Naive thymus-derived CD4-positive, alpha-beta T cell (primary cell): ENCODE measurements at regions of chrX and their contacts with region 1.

Region 1: DNA sequence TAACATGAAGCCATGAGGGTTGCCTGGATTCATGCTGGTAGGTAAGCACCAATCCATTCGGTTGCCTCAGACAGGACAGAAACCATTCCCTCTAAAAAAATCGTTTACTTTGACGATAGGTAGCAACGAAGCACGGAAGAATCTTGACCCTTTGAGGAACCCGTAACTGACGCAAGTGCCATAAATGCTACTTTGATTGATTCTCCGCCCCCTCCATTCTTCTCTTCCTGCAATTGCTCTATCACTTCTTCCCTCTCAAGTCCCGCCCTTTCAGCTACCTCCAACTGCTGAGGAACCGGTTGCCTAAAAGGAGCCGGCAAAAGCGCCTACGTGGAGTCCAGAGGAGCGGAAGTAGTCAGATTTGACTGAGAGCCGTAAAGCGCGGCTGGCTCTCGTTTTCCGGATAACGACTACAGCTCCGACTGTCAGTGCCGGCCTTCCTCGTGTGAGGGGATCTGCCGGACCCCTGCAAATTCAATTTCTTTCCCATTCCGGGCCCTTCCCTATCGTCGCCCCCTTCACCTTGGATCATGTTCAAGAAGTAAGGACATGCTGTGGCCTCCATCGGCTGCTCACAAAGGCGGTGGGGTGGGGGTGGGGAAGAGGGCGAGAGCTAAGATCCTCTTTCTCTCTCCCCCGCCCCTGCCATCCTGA is at the start of gene MCTS1:
- DNase-seq: peak; percentile 40 to 91 (median 82)
- ATAC-seq: peak; percentile 95
- H3K4me3 ChIP-seq: peak within 1 kb of the TSS; percentile 55
- H3K4me3 Mint-ChIP-seq: peak within 1 kb of the TSS; percentile 91 to 99 (median 96)
- H3K27ac ChIP-seq: peak within 1 kb of the TSS; percentile 87
- H3K27ac Mint-ChIP-seq: peak within 1 kb of the TSS; percentile 96 to 99 (median 98)
- H3K4me1 ChIP-seq: peaks cover 6 to 10% of the 10 kb centered on the region in 2 donors
- H3K4me1 Mint-ChIP-seq: peaks cover 0 to 19% (median 10%) of the 10 kb centered on the region in 7 donors
- H3K27me3 ChIP-seq: no peaks in the 10 kb centered on the region
- H3K27me3 Mint-ChIP-seq: peaks cover 0 to 7% (median 0%) of the 10 kb centered on the region in 5 donors
- total RNA-seq, gene MCTS1: 17.6 to 55.6 (median 27.3) TPM

Region 2: DNA sequence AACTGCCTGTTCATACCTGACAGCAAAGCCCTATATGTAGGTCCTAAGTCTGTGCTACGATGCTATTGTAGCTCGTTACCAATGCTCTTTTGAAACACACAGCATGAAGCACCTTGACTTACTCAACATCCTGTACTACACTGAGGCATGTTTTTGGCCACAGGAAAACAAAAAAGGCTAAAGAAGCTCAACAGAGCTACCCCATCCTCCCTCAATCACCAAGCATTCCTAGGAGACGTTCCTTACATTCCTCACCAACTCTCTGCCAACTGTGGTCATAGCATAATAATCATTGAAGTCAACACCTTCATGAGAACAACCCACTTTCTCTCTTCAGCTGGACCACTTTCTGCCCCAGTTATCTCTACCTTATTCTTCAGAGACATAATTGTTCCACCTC is 1278.4 kb before region 1 on chrX:
- CTCF ChIA-PET with region 1: no interaction called
- POLR2A ChIA-PET with region 1: no interaction called
- intact Hi-C with region 1: no loop called
- DNase-seq: no peak
- ATAC-seq: no peak
- H3K4me3 ChIP-seq: no peak overlapping the region
- H3K4me3 Mint-ChIP-seq: no peak overlapping the region
- H3K27ac ChIP-seq: no peak overlapping the region
- H3K27ac Mint-ChIP-seq: no peak overlapping the region
- H3K4me1 ChIP-seq: no peaks in the 10 kb centered on the region
- H3K4me1 Mint-ChIP-seq: no peaks in the 10 kb centered on the region
- H3K27me3 ChIP-seq: no peaks in the 10 kb centered on the region
- H3K27me3 Mint-ChIP-seq: peaks cover 0 to 8% (median 0%) of the 10 kb centered on the region in 5 donors

Region 3: DNA sequence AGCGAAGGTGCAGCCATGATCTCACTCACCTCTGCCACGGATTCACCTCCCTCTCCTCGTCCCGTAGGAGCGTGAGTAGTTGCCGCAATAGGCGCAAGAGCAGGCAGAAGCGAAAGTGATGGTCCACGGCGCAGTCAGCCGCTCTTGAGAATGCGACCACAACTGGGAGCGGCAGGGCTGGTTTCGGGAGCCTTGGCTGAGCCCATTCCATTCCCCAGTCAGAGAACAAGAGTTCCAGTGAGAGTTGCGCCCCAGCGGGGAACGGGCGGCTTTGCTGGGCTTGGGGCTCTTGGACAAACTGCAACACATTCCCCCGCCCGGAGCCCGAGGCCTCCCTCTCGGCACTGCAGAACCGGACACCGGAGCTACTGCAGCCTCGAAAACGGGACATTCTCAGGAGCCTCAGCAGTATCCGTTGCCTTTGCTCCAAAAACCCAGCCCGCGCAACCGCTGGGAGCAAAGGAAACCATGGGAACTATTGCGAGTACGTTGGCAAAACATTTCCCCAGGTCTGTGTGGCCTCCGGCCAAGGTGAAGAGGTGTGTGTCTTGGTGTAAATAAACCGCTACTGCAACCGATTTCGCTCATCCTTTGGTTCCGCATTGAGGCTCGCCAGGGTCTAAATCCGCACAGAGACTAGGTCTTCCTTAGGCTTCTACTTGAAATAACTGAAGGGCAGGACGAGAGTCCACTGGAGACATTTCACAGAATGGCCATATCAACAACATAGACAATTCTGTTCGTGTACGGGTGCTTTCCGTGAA is 358.9 kb before region 1 on chrX:
- CTCF ChIA-PET with region 1: no interaction called
- POLR2A ChIA-PET with region 1: no interaction called
- intact Hi-C with region 1: loop called in 1 of 2 experiments (anchors 10 kb)
- DNase-seq: peak; percentile 22 to 68 (median 52)
- ATAC-seq: peak; percentile 92
- H3K4me3 ChIP-seq: peak overlapping the region; percentile 73
- H3K4me3 Mint-ChIP-seq: peak overlapping the region; percentile 85 to 100 (median 96)
- H3K27ac ChIP-seq: peak overlapping the region; percentile 77
- H3K27ac Mint-ChIP-seq: peak overlapping the region; percentile 78 to 97 (median 90)
- H3K4me1 ChIP-seq: peaks cover 5 to 6% of the 10 kb centered on the region in 2 donors
- H3K4me1 Mint-ChIP-seq: peaks cover 12 to 32% (median 27%) of the 10 kb centered on the region in 7 donors
- H3K27me3 ChIP-seq: no peaks in the 10 kb centered on the region
- H3K27me3 Mint-ChIP-seq: peaks cover 0 to 4% (median 0%) of the 10 kb centered on the region in 5 donors

Region 4: DNA sequence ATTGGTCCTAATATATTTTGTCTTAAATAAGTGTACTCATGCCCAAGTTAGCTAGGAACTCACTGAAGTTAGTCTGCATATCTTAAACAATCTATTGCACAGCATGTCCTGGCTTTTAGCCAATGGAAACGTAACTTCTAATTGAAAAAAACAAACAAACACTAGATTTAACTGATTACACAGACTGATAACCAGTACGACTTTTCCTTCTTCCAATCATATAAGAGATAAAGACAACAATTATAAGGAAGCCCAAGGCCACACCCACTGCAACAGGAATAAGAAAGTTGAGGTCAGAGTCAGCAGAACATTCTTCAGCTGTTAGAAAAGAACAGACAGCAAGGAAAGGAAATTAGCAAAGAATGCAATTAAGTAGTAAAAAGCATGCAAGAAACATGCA is 175.5 kb before region 1 on chrX:
- CTCF ChIA-PET with region 1: no interaction called
- POLR2A ChIA-PET with region 1: no interaction called
- intact Hi-C with region 1: no loop called
- DNase-seq: peak in 2 of 9 donors; percentile 8 to 15
- ATAC-seq: no peak
- H3K4me3 ChIP-seq: no peak overlapping the region
- H3K4me3 Mint-ChIP-seq: peak overlapping the region in 2 of 10 donors; percentile 39 to 56
- H3K27ac ChIP-seq: no peak overlapping the region
- H3K27ac Mint-ChIP-seq: peak overlapping the region in 6 of 9 donors; percentile 5 to 72 (median 40)
- H3K4me1 ChIP-seq: no peaks in the 10 kb centered on the region
- H3K4me1 Mint-ChIP-seq: peaks cover 2 to 27% (median 15%) of the 10 kb centered on the region in 7 donors
- H3K27me3 ChIP-seq: no peaks in the 10 kb centered on the region
- H3K27me3 Mint-ChIP-seq: no peaks in the 10 kb centered on the region

Region 5: DNA sequence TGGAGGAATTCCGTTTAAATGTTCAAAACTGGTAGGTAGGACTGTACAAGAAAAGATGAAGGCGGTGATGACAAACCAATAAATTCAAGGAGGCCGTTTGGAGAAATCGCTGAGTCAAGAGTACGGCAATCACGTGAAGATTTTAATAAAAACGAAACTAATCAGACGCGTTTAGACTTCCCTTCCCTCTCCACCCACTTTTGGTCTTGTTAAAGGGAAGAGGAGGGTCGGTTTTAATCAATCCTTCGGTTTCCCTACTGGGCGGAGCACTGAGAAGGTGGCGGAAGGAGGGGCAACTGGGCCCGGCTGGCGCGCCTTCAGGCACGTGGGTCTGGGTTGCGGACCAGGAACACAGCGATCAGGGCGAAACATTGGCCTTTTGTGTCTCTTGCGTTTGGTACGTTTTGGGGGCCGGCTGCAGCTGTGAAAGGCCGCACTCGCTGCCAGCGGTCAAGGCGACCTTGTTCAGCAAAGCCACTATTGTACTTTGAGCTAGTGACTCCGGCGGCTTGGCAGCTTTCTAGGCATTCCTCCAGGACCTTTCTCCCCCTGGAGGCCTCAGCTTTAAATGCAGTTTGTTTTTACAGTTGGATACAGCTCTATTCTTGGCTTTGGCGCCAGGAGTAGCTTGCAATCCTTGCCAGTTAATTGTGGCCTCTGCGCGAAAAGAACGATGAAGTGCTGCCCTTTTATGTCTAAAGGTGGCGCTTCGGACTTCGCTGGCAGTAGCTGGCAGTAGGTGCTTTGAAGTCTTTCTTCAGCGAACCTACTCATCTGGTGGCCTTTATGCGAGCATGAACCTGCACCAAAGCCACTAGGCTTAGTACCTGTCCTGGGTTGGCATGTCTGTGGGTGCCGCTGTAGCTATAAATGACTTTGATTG is 118.0 kb before region 1 on chrX:
- CTCF ChIA-PET with region 1: no interaction called
- POLR2A ChIA-PET with region 1: no interaction called
- intact Hi-C with region 1: loop called (anchors 5 kb)
- DNase-seq: peak; percentile 21 to 52 (median 43)
- ATAC-seq: peak; percentile 83
- H3K4me3 ChIP-seq: peak overlapping the region; percentile 89
- H3K4me3 Mint-ChIP-seq: peak overlapping the region; percentile 81 to 94 (median 89)
- H3K27ac ChIP-seq: peak overlapping the region; percentile 69
- H3K27ac Mint-ChIP-seq: peak overlapping the region; percentile 81 to 96 (median 91)
- H3K4me1 ChIP-seq: peaks cover 9 to 18% of the 10 kb centered on the region in 2 donors
- H3K4me1 Mint-ChIP-seq: peaks cover 5 to 28% (median 19%) of the 10 kb centered on the region in 7 donors
- H3K27me3 ChIP-seq: no peaks in the 10 kb centered on the region
- H3K27me3 Mint-ChIP-seq: no peaks in the 10 kb centered on the region